Aorta (tissue), 5 donors: ENCODE measurements at regions of chr9 and their contacts with region 1.

Region 1: DNA sequence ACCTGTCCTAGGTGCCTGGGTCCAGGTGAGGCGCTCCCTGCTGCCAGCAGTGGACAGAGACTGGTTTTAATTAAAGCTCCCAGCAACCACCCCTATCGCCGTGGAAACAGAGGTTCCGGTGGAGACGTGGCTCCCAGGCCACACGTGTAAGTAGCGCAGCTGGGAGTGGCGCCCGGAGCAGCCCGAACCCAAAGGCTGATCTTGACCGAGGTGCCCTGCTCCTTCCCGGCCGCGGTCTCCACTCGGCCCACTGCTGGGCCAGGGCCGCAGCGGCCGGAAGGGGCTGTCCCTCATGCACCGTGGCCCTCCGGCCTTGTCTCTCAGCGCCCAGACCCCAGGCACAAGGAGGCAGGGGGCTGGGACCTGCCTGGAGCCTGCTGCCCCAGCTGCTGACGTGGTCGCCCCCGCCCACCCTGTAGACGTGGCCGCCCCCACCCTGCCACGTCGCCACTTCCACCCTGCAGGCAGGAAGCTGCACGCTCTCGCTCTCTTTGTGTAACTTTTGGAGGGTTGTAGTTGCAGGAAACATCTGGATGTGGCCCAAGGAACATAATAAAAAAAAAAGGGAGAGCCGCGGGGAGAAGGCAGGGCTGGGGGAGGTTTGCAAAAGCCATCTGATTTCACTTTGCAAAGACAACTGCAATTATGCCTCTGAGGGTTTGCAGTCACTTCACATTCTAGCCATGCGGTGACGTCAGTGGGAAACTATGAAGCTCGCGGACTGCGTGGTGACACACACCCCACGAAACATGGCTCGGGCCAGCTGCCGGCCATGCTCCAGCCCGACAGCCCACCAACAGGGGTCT is 129.9 kb downstream of the RXRA start:
- DNase-seq: peak; percentile 93 to 94
- ATAC-seq: peak; percentile 90
- H3K4me3 ChIP-seq: no peak overlapping the region
- H3K27ac ChIP-seq: peak overlapping the region; percentile 64 to 88
- H3K4me1 ChIP-seq: peaks cover 0 to 4% of the 10 kb centered on the region in 2 donors
- H3K27me3 ChIP-seq: no peaks in the 10 kb centered on the region

Region 2: DNA sequence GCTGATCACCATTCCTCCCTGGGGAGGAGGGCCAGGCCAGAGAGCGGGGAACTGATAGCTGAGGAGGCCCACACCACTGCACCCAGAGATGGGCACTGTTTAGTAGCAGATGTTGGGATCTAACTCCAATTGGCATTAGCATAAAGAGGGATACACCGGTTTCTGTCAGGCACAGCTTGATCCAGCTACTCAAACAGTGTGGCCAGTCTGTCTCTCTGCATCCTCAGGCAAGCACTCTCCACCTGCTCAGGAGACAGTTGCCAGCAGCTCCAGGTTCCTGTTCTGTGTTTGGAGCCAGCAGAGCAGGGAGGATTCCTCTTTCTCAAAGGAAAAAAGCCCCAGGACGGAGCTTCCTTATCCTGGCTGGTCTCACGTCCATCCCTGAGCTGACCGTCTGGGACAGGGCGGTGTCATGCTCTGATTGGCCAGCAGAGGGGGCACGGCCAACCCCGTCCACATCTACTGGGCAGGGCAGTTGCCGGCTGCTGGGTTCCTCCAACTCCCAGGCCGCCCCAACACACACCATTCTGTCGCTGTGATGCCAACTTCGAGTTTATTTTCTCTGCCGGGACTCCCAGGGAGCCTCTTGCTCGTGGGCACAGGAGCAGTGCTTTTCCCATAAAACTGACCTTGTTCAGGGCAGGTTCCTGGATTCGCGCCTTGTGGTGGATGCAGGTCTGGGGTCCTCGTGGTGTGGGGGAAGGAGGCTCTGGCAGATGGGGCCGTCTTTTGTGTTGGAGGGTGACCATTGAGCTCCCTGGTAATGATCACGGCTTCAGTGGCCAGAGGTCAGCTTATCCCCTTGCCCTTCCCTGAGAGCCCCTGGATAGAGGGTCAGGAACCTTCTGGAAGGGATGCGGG is 233.4 kb after region 1 on chr9:
- intact Hi-C with region 1: loop called in 1 of 2 experiments (anchors 5 kb)
- DNase-seq: peak; percentile 85 to 93
- ATAC-seq: peak; percentile 86
- H3K4me3 ChIP-seq: no peak overlapping the region
- H3K27ac ChIP-seq: no peak overlapping the region
- H3K4me1 ChIP-seq: no peaks in the 10 kb centered on the region
- H3K27me3 ChIP-seq: no peaks in the 10 kb centered on the region